ENCODE measurements at regions of chr10 and their contacts with region 1.

Region 1: DNA sequence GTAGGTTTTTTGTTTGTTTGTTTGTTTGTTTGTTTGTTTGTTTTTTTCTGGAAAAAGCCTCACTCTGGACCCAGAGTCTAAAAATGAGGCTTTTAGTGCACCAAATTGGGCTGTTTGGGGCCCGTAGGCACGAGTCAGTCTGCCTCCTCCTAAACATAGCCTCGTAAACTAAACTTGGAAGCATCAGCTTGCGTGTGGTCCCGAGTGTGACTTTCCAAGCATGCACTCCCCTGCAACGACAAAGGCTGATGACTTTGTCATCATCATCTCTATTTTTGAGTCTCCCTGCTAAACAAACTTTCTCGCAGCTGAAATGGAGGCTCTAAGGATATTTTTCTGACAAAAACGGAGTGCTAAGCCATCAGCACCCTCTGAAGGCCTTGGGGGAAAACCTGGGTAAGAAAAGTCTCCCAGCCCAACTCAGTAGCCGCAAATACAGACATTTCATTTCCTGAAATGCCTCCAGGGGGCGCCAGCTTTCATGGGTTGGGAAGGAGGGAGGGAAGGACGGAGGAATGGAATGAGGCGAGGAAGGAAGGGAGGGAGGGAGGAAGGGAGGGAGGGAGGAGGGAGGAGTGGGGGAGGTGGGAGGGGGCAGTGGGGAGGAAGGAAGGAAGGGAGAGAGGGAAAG is 245.9 kb downstream of the KCNMA1 start:
- DNase-seq: peak; percentile 82
- H3K4me3 Mint-ChIP-seq: no peak overlapping the region
- H3K27ac Mint-ChIP-seq: no peak overlapping the region
- H3K4me1 Mint-ChIP-seq: peaks cover 41% of the 10 kb centered on the region
- H3K27me3 Mint-ChIP-seq: no peaks in the 10 kb centered on the region
- CTCF ChIP-seq: peak; percentile 60

Region 2: GRCh38 chr10:77173615-77174461 is 217.9 kb before region 1 on chr10:
- CTCF ChIA-PET with region 1: interaction called, 28 read pairs
- POLR2A ChIA-PET with region 1: interaction called, 3 read pairs
- intact Hi-C with region 1: loop called (anchors 2 kb)
- DNase-seq: peak; percentile 77
- H3K4me3 Mint-ChIP-seq: no peak overlapping the region
- H3K27ac Mint-ChIP-seq: no peak overlapping the region
- H3K4me1 Mint-ChIP-seq: peaks cover 5% of the 10 kb centered on the region
- H3K27me3 Mint-ChIP-seq: no peaks in the 10 kb centered on the region
- CTCF ChIP-seq: peak; percentile 89

Region 3: DNA sequence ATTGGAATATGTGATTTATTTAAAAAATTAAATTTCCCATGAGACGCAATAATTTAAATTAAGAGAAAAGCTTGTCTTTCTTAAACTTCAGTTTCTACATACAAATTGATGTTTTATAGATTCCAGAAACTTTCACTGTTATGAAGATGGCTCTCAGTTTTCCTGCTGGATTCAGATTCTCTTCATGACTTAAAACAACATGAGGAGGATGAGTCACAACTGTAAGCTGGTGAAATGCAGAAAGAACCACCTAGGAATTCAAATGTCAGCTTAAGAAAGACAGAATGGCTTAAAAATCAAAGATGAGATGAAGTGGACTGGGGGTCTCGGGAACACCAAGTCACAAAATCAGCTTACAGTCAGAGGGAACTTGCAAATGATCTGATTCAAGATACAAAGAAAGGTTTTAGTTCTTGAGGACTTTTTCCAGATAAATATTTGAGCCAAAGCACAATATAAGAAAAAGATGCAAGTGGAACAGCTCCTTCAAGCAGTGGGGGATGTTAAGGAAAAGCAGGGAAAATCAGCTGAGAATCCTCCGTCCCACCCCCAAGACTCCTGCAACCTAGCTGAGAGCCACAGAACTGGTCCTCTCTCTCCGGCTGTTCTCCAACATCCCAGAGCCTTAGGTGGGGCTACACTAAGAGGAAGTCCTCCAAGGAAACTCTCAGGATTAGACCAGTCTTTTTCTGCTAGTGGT is 34.0 kb before region 1 on chr10:
- CTCF ChIA-PET with region 1: interaction called, 9 read pairs
- POLR2A ChIA-PET with region 1: interaction called, 4 read pairs
- intact Hi-C with region 1: loop called (anchors 1 kb)
- DNase-seq: peak; percentile 47
- H3K4me3 Mint-ChIP-seq: no peak overlapping the region
- H3K27ac Mint-ChIP-seq: no peak overlapping the region
- H3K4me1 Mint-ChIP-seq: peaks cover 36% of the 10 kb centered on the region
- H3K27me3 Mint-ChIP-seq: no peaks in the 10 kb centered on the region
- CTCF ChIP-seq: no peak

Region 4: DNA sequence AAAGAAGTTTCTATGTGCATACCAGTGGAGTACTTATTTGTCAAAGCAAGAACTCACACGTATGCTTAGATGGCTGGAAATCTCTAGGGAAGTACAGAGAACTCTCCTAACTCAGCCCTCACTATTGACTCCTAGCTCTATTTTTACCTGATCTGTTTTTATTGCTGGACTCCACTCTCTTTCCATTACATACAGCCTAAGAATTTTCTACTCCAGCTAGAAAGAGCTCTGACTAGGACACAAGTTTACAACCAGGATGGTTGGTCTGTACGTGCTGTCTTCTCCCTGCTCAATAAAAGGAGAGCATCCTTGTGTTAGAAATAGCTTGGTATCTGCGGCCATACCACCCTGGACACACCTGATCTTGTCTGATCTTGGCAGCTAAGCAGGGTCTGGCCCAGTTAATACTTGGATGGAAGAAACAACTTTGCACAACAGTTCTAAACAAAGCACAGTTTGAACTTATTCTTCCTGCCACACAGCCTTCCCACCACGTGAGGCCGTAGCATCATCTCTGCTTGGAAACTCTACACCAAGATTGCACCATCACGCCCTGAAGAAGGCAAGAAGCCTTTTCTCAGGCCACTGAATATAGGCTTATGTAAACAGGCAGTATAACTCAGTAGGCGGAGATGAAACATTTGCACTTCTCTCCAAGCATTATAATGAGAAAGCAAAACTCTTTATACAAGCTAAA is 195.1 kb after region 1 on chr10:
- CTCF ChIA-PET with region 1: interaction called, 3 read pairs
- POLR2A ChIA-PET with region 1: interaction called, 3 read pairs
- intact Hi-C with region 1: loop called (anchors 5 kb)
- DNase-seq: peak; percentile 92
- H3K4me3 Mint-ChIP-seq: no peak overlapping the region
- H3K27ac Mint-ChIP-seq: peak overlapping the region; percentile 83
- H3K4me1 Mint-ChIP-seq: peaks cover 30% of the 10 kb centered on the region
- H3K27me3 Mint-ChIP-seq: no peaks in the 10 kb centered on the region
- CTCF ChIP-seq: no peak

Region 5: GRCh38 chr10:77641788-77642397 is 250.2 kb after region 1 on chr10:
- CTCF ChIA-PET with region 1: interaction called, 95 read pairs
- POLR2A ChIA-PET with region 1: no interaction called
- intact Hi-C with region 1: loop called (anchors 1 kb)
- DNase-seq: peak; percentile 82
- H3K4me3 Mint-ChIP-seq: no peak overlapping the region
- H3K27ac Mint-ChIP-seq: no peak overlapping the region
- H3K4me1 Mint-ChIP-seq: peaks cover 7% of the 10 kb centered on the region
- H3K27me3 Mint-ChIP-seq: no peaks in the 10 kb centered on the region
- CTCF ChIP-seq: peak; percentile 66

Region 6: DNA sequence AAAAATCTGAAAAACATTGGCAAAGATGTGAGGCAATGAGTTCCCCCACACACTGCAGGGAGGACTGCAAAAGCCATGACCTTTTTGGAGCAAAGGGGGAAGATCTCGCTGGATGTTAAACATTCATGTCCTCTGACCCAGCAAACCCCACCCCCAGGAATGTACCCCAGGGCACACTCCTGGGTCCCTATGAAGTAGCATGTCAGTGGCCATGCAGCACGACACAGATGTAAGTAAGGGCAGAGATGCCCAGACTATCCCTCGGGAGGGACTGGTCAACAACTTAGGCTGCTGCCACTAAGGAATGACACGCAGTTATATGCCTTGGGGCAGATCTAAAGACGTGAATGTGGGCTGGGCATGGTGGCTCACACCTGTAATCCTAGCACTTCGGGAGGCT is 434.3 kb after region 1 on chr10:
- CTCF ChIA-PET with region 1: no interaction called
- POLR2A ChIA-PET with region 1: no interaction called
- intact Hi-C with region 1: no loop called
- DNase-seq: no peak
- H3K4me3 Mint-ChIP-seq: no peak overlapping the region
- H3K27ac Mint-ChIP-seq: no peak overlapping the region
- H3K4me1 Mint-ChIP-seq: no peaks in the 10 kb centered on the region
- H3K27me3 Mint-ChIP-seq: no peaks in the 10 kb centered on the region
- CTCF ChIP-seq: no peak